ENCODE measurements at regions of chr1 and their contacts with region 1.

Region 1: DNA sequence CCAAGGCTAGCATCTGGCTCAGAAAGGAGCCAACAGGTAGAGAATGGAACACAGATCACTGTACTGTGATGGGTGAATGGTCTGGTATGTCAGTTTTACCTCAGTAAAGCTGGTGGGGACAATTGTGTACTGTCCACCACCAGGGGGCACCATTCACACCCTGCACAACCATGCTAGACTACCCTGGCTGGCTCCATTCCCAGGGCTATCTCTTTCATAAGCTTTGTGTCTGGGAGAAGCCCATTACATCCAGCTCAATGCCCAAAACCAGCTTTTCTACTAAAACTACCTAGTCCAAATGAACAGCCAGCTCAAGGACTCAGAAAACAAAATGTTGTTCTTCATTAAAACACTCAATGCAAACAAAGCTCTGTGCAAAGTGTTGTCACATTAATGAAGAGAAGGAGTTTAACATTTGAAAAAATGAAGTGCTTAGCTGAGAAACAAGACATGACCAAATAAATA is 62.0 kb upstream of the RASAL2 start:
- DNase-seq: peak; percentile 71
- H3K4me3 ChIP-seq: no peak overlapping the region
- H3K27ac ChIP-seq: no peak overlapping the region
- H3K4me1 ChIP-seq: peaks cover under 1% of the 10 kb centered on the region
- H3K27me3 ChIP-seq: no peaks in the 10 kb centered on the region
- CTCF ChIP-seq: peak; percentile 89 to 91

Region 2: DNA sequence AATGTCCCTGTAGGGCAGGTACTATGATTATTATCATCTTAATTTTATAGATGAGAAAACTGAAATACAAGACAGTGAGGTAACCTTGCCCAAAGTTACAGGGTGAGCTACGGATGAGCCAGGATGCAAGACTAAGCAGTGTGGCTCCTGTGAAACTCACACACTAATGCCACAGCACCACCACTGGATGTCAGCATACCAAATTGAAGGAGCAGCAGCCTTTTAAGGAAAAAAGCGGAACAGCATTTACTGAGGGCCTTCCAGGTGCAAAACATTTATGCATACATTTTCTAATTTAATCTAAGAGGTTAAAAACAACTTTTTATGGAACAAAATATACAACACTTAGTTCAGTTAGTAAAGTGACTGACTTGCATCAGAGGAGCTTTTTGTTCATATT is 103.7 kb before region 1 on chr1:
- CTCF ChIA-PET with region 1: no interaction called
- dilution Hi-C with region 1: no loop called
- in situ Hi-C with region 1: no loop called
- intact Hi-C with region 1: no loop called
- DNase-seq: peak; percentile 38
- H3K4me3 ChIP-seq: no peak overlapping the region
- H3K27ac ChIP-seq: peak overlapping the region; percentile 66
- H3K4me1 ChIP-seq: peaks cover 29% of the 10 kb centered on the region
- H3K27me3 ChIP-seq: no peaks in the 10 kb centered on the region
- CTCF ChIP-seq: peak in 1 of 2 donors; percentile 37

Region 3: GRCh38 chr1:177959811-177960515 is 71.9 kb before region 1 on chr1:
- CTCF ChIA-PET with region 1: no interaction called
- dilution Hi-C with region 1: no loop called
- in situ Hi-C with region 1: no loop called
- intact Hi-C with region 1: loop called (anchors 2 kb)
- DNase-seq: peak; percentile 33
- H3K4me3 ChIP-seq: no peak overlapping the region
- H3K27ac ChIP-seq: no peak overlapping the region
- H3K4me1 ChIP-seq: no peaks in the 10 kb centered on the region
- H3K27me3 ChIP-seq: no peaks in the 10 kb centered on the region
- CTCF ChIP-seq: peak; percentile 44 to 53

Region 4: DNA sequence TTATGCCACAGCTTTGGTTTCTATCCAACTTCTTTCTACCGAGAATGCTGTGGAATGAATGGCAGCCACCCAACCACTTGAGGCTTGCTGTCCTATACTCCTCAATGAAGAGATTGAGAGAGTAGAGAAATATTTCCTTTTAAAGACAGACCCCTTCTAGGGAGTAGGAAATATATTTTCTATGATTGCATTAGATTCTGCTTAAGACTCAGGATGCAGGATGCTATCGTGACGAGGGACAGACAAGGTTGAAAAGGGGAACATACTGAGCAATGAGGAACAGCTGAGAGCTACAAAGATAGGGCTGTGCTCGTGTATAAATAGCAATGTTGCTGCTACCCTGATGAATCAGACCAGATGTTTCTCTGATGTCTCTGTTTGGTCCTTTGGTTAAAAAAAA is 54.9 kb after region 1 on chr1:
- CTCF ChIA-PET with region 1: no interaction called
- dilution Hi-C with region 1: no loop called
- in situ Hi-C with region 1: no loop called
- intact Hi-C with region 1: no loop called
- DNase-seq: no peak
- H3K4me3 ChIP-seq: no peak overlapping the region
- H3K27ac ChIP-seq: no peak overlapping the region
- H3K4me1 ChIP-seq: no peaks in the 10 kb centered on the region
- H3K27me3 ChIP-seq: no peaks in the 10 kb centered on the region
- CTCF ChIP-seq: no peak

Region 5: DNA sequence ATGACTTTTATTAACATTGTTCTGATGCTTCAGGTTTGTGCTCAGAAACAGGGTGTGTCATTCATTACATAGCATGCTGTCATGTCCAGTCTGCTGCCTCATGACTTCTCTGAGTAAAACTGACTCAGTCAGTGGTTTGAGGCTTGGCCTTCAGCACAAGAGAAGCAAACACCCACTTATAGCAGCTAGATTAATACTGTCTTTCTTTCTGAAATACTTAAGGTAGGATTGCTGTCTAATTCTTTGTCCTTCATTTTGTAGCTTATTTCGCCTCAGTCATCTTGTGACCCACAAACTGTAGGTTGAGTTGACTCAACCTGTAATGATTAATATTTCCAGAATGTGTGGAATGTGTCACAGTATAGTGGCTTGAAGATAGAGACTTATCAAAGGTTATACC is 94.9 kb after region 1 on chr1:
- CTCF ChIA-PET with region 1: no interaction called
- dilution Hi-C with region 1: loop called (anchors 5 kb)
- in situ Hi-C with region 1: no loop called
- intact Hi-C with region 1: no loop called
- DNase-seq: peak; percentile 97
- H3K4me3 ChIP-seq: peak overlapping the region in 1 of 3 experiments; percentile 50
- H3K27ac ChIP-seq: peak overlapping the region; percentile 99
- H3K4me1 ChIP-seq: peaks cover 55% of the 10 kb centered on the region
- H3K27me3 ChIP-seq: no peaks in the 10 kb centered on the region
- CTCF ChIP-seq: no peak

Region 6: GRCh38 chr1:178189814-178190213 is 157.9 kb after region 1 on chr1:
- CTCF ChIA-PET with region 1: interaction called, 8 read pairs
- dilution Hi-C with region 1: no loop called
- in situ Hi-C with region 1: no loop called
- intact Hi-C with region 1: loop called (anchors 1 kb)
- DNase-seq: no peak
- H3K4me3 ChIP-seq: no peak overlapping the region
- H3K27ac ChIP-seq: peak overlapping the region; percentile 0
- H3K4me1 ChIP-seq: peaks cover 9% of the 10 kb centered on the region
- H3K27me3 ChIP-seq: no peaks in the 10 kb centered on the region
- CTCF ChIP-seq: peak; percentile 51 to 67

Region 7: GRCh38 chr1:178273707-178274410 is 242.0 kb after region 1 on chr1:
- CTCF ChIA-PET with region 1: no interaction called
- dilution Hi-C with region 1: no loop called
- in situ Hi-C with region 1: loop called (anchors 5 to 10 kb)
- intact Hi-C with region 1: no loop called
- DNase-seq: peak; percentile 57
- H3K4me3 ChIP-seq: no peak overlapping the region
- H3K27ac ChIP-seq: peak overlapping the region; percentile 48
- H3K4me1 ChIP-seq: peaks cover 64% of the 10 kb centered on the region
- H3K27me3 ChIP-seq: no peaks in the 10 kb centered on the region
- CTCF ChIP-seq: no peak

Region 8: GRCh38 chr1:178282949-178283367 is 251.1 kb after region 1 on chr1:
- CTCF ChIA-PET with region 1: no interaction called
- dilution Hi-C with region 1: no loop called
- in situ Hi-C with region 1: loop called (anchors 5 to 10 kb)
- intact Hi-C with region 1: loop called (anchors 1 kb)
- DNase-seq: peak; percentile 72
- H3K4me3 ChIP-seq: no peak overlapping the region
- H3K27ac ChIP-seq: peak overlapping the region; percentile 55
- H3K4me1 ChIP-seq: peaks cover 29% of the 10 kb centered on the region
- H3K27me3 ChIP-seq: no peaks in the 10 kb centered on the region
- CTCF ChIP-seq: peak; percentile 48 to 56

Region 9: GRCh38 chr1:178501705-178502329 is 469.9 kb after region 1 on chr1:
- CTCF ChIA-PET with region 1: interaction called, 3 read pairs
- dilution Hi-C with region 1: no loop called
- in situ Hi-C with region 1: no loop called
- intact Hi-C with region 1: loop called (anchors 5 kb)
- DNase-seq: peak; percentile 43
- H3K4me3 ChIP-seq: no peak overlapping the region
- H3K27ac ChIP-seq: no peak overlapping the region
- H3K4me1 ChIP-seq: no peaks in the 10 kb centered on the region
- H3K27me3 ChIP-seq: no peaks in the 10 kb centered on the region
- CTCF ChIP-seq: peak; percentile 95 to 98

Region 10: GRCh38 chr1:178566187-178566586 is 534.3 kb after region 1 on chr1:
- CTCF ChIA-PET with region 1: no interaction called
- dilution Hi-C with region 1: no loop called
- in situ Hi-C with region 1: no loop called
- intact Hi-C with region 1: no loop called
- DNase-seq: peak; percentile 58
- H3K4me3 ChIP-seq: no peak overlapping the region
- H3K27ac ChIP-seq: no peak overlapping the region
- H3K4me1 ChIP-seq: no peaks in the 10 kb centered on the region
- H3K27me3 ChIP-seq: no peaks in the 10 kb centered on the region
- CTCF ChIP-seq: no peak

Measured in mammary epithelial cell (primary cell).